ENCODE measurements at regions of chr1 and their contacts with region 1.

Region 1: GRCh38 chr1:161021165-161021960 is 411 bp upstream of the F11R start:
- DNase-seq: peak; percentile 27 to 94 (median 60)

Region 2: GRCh38 chr1:160971618-160972056 is 49.7 kb before region 1 on chr1:
- intact Hi-C with region 1: loop called (anchors 1 kb)
- DNase-seq: no peak

Region 3: GRCh38 chr1:161330346-161330745 is 309.0 kb after region 1 on chr1:
- intact Hi-C with region 1: no loop called
- DNase-seq: no peak